Sigmoid colon (tissue), 7 donors: ENCODE measurements at regions of chr5 and their contacts with region 1.

Region 1: GRCh38 chr5:66757188-66757833 is 161.1 kb downstream of the MAST4 start:
- DNase-seq: no peak
- H3K4me3 ChIP-seq: no peak overlapping the region
- H3K27ac ChIP-seq: no peak overlapping the region
- H3K4me1 ChIP-seq: no peaks in the 10 kb centered on the region
- H3K27me3 ChIP-seq: no peaks in the 10 kb centered on the region
- CTCF ChIP-seq: peak in 1 of 4 experiments; percentile 33
- EP300 ChIP-seq: no peak
- POLR2A ChIP-seq: no peak

Region 2: GRCh38 chr5:66306105-66306843 is 451.0 kb before region 1 on chr5:
- intact Hi-C with region 1: loop called (anchors 2 kb)
- DNase-seq: peak; percentile 72
- H3K4me3 ChIP-seq: no peak overlapping the region
- H3K27ac ChIP-seq: no peak overlapping the region
- H3K4me1 ChIP-seq: peaks cover 0 to 12% (median 0%) of the 10 kb centered on the region in 4 donors
- H3K27me3 ChIP-seq: no peaks in the 10 kb centered on the region
- CTCF ChIP-seq: peak in 3 of 4 experiments; percentile 65 to 73 (median 70)
- EP300 ChIP-seq: no peak
- POLR2A ChIP-seq: no peak

Region 3: DNA sequence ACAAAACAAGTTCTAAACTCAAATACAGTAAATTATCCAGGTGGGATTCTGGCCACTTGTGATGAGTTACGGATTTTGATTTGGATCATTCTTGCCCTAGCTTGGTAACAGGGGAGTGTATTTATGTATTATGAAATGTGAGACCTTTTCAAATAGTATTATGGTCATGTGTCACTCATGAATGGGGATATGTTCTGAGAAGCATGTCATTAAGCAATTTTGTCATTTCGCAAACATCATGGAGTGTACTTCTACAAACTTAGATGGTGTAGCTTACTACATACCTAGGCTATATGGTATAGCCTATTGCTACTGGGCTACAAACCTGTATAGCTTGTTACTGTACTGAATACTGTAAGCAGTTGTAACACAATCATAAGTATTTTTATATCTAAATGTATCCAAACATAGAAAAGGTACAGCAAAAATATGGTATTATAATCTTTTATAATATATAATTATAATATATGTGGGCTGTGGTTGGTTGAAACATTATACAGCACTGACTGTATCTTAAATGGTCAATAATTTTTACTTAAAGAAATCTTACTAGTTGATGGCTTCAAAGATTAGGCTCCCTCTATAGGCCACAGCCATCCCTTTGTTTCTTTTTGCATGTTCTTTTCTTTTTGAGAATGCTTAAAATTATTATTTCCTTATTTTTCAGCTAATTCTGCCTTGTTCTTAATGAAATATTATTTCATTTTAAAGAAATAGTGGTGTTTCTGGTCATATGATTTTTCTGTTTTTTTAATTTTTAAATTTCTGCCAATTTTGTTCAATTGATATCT is 32.8 kb before region 1 on chr5:
- intact Hi-C with region 1: no loop called
- DNase-seq: no peak
- H3K4me3 ChIP-seq: no peak overlapping the region
- H3K27ac ChIP-seq: no peak overlapping the region
- H3K4me1 ChIP-seq: no peaks in the 10 kb centered on the region
- H3K27me3 ChIP-seq: no peaks in the 10 kb centered on the region
- CTCF ChIP-seq: no peak
- EP300 ChIP-seq: no peak
- POLR2A ChIP-seq: no peak